PC-9 (cell line): ENCODE measurements at regions of chr15 and their contacts with region 1.

Region 1: GRCh38 chr15:89888214-89888804 is 5.5 kb downstream of the AP3S2 start:
- DNase-seq: peak; percentile 32 to 60
- H3K4me3 ChIP-seq: no peak overlapping the region
- H3K27ac ChIP-seq: no peak overlapping the region
- H3K4me1 ChIP-seq: peaks cover 14% of the 10 kb centered on the region
- H3K27me3 ChIP-seq: no peaks in the 10 kb centered on the region
- CTCF ChIP-seq: peak; percentile 67

Region 2: DNA sequence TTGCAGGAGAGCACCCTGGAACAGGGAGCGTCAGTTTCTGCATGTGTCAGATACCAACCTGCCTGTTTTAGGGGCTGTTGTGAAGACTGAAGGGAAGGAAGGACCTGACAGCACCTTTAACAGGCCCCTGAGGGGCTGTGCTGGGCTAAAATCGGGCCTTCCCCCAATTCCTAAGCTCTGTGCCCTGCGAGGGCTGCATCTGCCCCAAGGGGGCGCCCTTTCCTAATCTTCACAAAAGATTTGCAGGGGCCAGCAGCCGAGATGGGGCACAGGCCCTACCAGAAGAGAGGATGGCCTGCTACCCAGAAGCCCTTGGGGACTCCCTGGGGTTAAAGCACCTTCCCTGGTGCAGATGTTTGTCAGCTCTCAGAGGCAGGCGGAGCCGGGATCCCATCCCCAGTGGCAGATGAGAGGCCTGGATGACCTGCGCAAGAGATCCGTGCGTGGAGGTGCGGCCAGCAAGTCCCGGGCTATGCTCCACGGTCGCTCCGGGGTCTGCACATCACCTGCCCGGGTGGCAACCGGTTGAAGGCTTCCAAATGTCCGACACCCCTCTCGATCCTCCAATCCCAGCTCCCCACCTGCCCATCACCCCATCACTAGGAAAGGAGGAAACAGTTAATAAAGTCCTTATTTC is 445.5 kb before region 1 on chr15:
- CTCF ChIA-PET with region 1: no interaction called
- POLR2A ChIA-PET with region 1: no interaction called
- intact Hi-C with region 1: loop called (anchors 10 kb)
- DNase-seq: peak in 1 of 2 experiments; percentile 56
- H3K4me3 ChIP-seq: no peak overlapping the region
- H3K27ac ChIP-seq: no peak overlapping the region
- H3K4me1 ChIP-seq: no peaks in the 10 kb centered on the region
- H3K27me3 ChIP-seq: peaks cover 28% of the 10 kb centered on the region
- CTCF ChIP-seq: peak; percentile 84

Region 3: DNA sequence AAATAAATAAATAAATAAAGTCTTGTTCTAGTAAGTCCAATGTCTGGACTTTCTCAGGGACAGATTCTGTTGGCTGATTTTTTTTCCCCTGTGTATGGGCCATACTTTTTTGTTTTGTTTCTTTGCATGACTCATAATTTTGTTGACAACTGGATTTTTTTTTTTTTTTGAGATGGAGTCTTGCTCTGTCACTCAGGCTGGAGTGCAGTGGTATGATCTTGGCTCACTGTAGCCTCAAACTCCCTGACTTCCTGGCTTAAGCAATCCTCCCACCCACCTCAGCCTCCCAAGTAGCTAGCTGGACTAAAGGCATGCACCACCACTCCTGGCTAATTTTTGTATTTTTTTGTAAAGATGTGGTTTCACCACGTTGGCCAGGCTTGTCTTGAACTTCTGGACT is 274.1 kb before region 1 on chr15:
- CTCF ChIA-PET with region 1: no interaction called
- POLR2A ChIA-PET with region 1: no interaction called
- intact Hi-C with region 1: no loop called
- DNase-seq: no peak
- H3K4me3 ChIP-seq: no peak overlapping the region
- H3K27ac ChIP-seq: no peak overlapping the region
- H3K4me1 ChIP-seq: no peaks in the 10 kb centered on the region
- H3K27me3 ChIP-seq: no peaks in the 10 kb centered on the region
- CTCF ChIP-seq: no peak

Region 4: GRCh38 chr15:89790661-89791060 is 97.6 kb before region 1 on chr15:
- CTCF ChIA-PET with region 1: no interaction called
- POLR2A ChIA-PET with region 1: no interaction called
- intact Hi-C with region 1: no loop called
- DNase-seq: no peak
- H3K4me3 ChIP-seq: no peak overlapping the region
- H3K27ac ChIP-seq: peak overlapping the region; percentile 0; the same call in 1 of the 2 replicates
- H3K4me1 ChIP-seq: peaks cover 22% of the 10 kb centered on the region
- H3K27me3 ChIP-seq: no peaks in the 10 kb centered on the region
- CTCF ChIP-seq: no peak